Left cardiac atrium (tissue), 4 donors: ENCODE measurements at regions of chr10 and their contacts with region 1.

Region 1: DNA sequence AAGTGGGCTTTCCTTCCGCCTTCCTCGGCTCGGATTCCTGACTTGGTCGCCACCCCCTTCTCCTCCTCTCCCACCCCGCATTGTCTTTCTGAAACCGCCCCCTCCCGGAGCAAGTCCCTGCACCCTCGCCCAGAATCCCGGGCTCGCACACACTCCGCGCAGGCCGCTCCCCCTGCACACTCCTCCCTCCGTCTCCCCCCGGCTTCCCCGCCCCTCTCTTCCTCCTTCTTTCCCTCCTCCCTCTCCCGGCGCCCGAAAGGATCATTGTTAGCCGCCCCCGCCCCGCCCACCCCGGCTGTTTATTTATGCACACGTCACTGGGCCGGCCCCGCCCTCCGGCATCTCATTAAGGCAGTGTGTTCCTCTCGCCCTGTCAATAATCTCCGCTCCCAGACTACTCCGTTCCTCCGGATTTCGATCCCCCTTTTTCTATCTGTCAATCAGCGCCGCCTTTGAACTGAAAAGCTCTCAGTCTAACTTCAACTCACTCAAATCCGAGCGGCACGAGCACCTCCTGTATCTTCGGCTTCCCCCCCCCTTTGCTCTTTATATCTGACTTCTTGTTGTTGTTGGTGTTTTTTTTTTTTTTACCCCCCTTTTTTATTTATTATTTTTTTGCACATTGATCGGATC is at the start of gene TCF7L2:
- DNase-seq: peak; percentile 97
- ATAC-seq: peak; percentile 87 to 96
- total RNA-seq, gene TCF7L2: 15.7 to 16.3 TPM

Region 2: GRCh38 chr10:112481602-112482001 is 468.4 kb before region 1 on chr10:
- intact Hi-C with region 1: no loop called
- DNase-seq: no peak
- ATAC-seq: no peak

Region 3: GRCh38 chr10:112724404-112724991 is 225.5 kb before region 1 on chr10:
- intact Hi-C with region 1: no loop called
- DNase-seq: no peak
- ATAC-seq: no peak

Region 4: DNA sequence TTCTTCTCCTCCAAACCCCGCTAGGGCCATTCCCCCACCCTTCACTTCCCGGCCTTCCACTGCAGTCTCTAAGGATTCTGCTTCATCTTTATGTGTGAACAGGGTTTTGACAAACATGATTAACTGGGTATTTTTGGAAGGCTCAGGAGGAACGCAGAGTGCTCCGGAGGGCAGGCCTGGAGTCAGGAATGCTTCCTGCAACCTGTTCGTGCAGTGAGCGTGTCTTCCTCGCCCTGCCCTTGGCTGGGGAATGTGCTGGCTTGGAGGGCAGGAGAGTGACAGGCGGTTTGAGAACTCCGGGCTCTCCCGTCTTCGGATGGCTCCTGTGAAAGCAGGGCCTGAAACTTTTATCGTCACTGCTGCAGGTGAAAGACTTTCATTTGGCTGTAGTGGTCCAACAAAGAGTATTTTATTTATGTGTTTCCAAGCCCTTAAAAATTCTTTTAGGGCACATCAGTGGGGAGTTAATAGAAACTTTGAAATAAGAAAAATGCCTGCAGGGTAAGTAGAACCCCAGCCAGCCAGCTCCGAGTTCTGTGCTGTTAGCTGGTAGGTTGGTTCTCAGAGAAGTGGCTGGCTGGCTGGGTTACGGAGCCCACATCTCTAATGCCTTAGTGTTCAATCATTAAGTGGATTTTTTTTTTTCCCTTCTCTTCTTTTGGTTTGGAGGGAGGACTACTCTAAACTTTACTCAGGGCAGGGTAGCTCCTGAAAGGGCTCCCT is 51.0 kb after region 1 on chr10:
- intact Hi-C with region 1: loop called in 1 of 2 experiments (anchors 10 kb)
- DNase-seq: peak; percentile 38
- ATAC-seq: peak; percentile 77 to 86

Region 5: GRCh38 chr10:113027574-113028455 is 77.8 kb after region 1 on chr10:
- intact Hi-C with region 1: loop called in 1 of 2 experiments (anchors 10 kb)
- DNase-seq: no peak
- ATAC-seq: peak; percentile 21 to 45

Region 6: DNA sequence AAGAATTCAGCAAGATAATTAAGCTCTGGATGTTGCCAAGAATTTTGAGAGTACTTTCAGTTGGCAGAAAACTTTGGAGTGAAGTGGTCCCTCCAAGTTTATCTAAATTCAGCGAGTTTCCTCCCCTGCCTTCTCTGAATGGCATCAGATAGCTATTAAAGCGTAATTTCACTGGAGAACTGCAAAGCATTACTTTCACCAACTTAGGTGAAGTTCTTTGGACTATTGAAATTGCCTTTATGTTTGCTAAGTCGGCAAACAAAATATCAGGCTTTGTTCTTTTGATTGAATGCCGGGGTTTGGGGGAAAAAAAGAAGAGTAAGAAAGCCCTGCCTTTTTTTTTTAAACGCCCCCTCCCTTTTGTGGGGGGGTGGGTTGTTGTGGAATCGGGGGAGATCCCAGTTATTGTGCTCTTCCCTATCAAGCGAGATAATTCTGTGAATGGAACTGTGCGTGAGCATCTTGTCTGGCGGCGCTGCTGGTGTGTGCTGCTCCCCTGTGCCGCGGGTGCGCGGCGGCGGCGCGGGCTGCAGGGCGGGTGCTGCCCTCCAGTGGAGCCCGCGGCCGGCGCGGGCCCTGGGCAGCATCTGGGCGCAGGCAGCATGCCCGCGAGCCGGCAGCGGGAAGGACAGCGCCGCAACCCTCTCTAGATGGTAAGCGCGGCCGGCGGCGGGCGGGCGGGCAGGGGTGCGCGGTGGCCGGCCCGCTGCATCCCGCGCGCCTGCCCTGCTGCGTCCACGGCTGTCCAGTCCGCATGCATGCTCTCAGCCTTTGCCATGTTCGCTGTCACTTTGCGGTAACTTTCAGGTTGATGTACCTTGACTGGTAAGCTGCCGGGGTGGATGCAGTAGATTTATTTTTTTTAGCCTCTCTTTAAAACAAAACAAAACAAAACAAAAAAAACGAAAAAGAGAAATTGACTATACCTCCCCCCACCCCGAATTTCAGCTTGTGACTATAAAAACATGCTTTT is 176.5 kb after region 1 on chr10:
- intact Hi-C with region 1: loop called (anchors 10 kb)
- DNase-seq: peak; percentile 80
- ATAC-seq: peak; percentile 97 to 98